Activated naive CD4-positive, alpha-beta T cell treated with anti-CD3 and anti-CD28 coated beads for 36 hours (primary cell): ENCODE measurements at regions of chr5 and their contacts with region 1.

Region 1: GRCh38 chr5:61331407-61332357 is at the start of gene ZSWIM6:
- DNase-seq: peak; percentile 99
- H3K4me3 Mint-ChIP-seq: peak within 1 kb of the TSS; percentile 87
- H3K27ac Mint-ChIP-seq: peak within 1 kb of the TSS; percentile 82
- H3K4me1 Mint-ChIP-seq: peaks cover 41% of the 10 kb centered on the region
- H3K27me3 Mint-ChIP-seq: peaks cover 20% of the 10 kb centered on the region
- total RNA-seq, gene ZSWIM6: 4.3 TPM

Region 2: DNA sequence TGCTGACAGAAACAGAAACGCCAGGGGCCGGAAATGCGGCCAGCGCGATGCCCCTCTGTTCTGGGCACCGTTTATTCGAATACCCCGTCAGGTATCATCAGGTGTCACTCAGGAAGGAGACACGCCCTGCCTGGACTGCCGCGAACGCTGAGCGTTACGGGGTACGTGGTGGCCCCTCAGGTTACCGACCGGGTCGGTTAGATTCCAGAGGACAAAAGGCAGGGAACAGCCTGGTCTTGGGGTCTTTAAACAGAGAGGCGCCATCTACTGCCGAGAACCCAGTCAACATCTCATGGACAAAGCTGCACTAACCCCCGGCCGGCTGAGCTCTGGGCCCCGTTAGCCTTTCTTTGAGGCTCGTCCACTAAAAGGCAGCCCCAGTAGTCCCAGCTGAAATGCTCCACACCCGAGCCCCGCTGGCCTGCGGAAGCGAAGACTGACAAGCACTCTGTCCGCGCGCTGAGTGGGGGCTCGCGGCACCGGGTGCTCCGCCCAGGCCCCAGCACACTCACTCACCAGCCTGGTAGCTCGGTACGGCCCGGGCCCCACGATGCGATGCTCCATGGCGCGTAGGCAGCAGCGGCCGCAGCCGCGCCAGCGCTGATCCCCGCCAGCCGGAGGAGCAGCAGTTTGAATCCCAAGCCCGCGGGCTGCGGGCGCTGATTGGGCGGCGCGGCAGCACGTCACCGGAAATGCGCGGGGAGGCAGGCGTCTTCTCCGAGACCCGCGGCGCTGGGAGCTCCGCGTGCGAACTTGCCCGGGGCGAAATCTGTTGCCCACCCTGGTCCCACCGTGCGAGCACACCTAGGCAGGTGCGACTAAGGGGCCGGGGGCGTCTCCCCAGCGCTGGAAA is 631.9 kb before region 1 on chr5 and contains the start of gene DEPDC1B:
- CTCF ChIA-PET with region 1: no interaction called
- intact Hi-C with region 1: loop called (anchors 1 kb)
- DNase-seq: peak; percentile 90
- H3K4me3 Mint-ChIP-seq: peak within 1 kb of the TSS; percentile 88
- H3K27ac Mint-ChIP-seq: peak within 1 kb of the TSS; percentile 81
- H3K4me1 Mint-ChIP-seq: peaks cover 12% of the 10 kb centered on the region
- H3K27me3 Mint-ChIP-seq: peaks cover 5% of the 10 kb centered on the region
- total RNA-seq, gene DEPDC1B: 35.0 to 35.8 TPM

Region 3: DNA sequence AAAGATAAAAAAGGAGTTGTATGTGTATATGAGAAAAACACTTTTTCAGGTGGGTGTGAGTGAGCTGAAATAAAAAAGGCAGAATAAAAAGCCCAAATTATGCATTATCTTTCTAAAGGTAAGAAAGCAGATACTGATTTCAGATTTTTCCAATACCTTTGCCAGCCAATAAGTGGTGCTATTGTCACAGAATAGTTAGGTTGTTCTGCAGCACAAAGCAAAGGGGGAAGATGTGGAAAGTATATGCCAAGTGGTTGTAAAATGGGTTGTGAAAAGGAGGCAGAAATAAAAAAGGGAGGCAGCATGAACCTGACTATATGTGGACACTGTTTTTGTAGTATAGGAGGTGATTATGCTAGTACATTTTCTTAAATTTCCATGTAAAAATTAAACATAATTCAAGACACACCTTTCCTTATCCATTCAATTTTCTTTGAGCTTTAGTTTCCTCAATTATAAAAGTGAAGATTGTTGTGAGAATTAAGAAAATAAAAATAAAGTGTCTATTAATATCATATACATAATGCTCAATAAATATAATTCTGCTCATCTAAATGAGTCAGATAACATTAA is 276.2 kb before region 1 on chr5:
- CTCF ChIA-PET with region 1: interaction called, 4 read pairs
- intact Hi-C with region 1: loop called (anchors 10 kb)
- DNase-seq: no peak
- H3K4me3 Mint-ChIP-seq: no peak overlapping the region
- H3K27ac Mint-ChIP-seq: no peak overlapping the region
- H3K4me1 Mint-ChIP-seq: no peaks in the 10 kb centered on the region
- H3K27me3 Mint-ChIP-seq: no peaks in the 10 kb centered on the region

Region 4: DNA sequence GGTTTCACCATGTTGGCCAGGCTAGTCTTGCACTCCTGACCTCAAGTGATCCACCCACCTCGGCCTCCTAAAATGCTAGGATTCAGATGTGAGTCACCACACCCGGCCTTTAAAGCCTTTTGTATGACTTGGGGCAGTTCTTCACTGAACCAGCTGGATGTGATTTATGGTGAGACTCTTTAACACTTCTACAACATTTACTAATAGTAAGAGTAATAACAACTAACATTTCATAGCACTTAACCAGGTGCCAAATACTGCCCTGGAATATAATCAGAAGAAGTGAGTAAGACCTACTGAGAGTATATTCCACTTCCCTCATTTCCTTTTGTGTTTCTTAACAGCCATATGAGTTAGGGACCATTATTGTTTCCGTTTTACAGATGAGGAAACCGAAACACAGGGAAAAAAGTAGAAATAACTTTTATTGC is 10.4 kb after region 1 on chr5:
- CTCF ChIA-PET with region 1: interaction called, 3 read pairs
- intact Hi-C with region 1: loop called (anchors 1 kb)
- DNase-seq: peak; percentile 31
- H3K4me3 Mint-ChIP-seq: no peak overlapping the region
- H3K27ac Mint-ChIP-seq: no peak overlapping the region
- H3K4me1 Mint-ChIP-seq: peaks cover 26% of the 10 kb centered on the region
- H3K27me3 Mint-ChIP-seq: no peaks in the 10 kb centered on the region

Region 5: GRCh38 chr5:61625681-61626621 is 294.3 kb after region 1 on chr5:
- CTCF ChIA-PET with region 1: no interaction called
- intact Hi-C with region 1: loop called (anchors 5 kb)
- DNase-seq: peak; percentile 60
- H3K4me3 Mint-ChIP-seq: peak overlapping the region; percentile 59
- H3K27ac Mint-ChIP-seq: no peak overlapping the region
- H3K4me1 Mint-ChIP-seq: no peaks in the 10 kb centered on the region
- H3K27me3 Mint-ChIP-seq: peaks cover 40% of the 10 kb centered on the region

Region 6: DNA sequence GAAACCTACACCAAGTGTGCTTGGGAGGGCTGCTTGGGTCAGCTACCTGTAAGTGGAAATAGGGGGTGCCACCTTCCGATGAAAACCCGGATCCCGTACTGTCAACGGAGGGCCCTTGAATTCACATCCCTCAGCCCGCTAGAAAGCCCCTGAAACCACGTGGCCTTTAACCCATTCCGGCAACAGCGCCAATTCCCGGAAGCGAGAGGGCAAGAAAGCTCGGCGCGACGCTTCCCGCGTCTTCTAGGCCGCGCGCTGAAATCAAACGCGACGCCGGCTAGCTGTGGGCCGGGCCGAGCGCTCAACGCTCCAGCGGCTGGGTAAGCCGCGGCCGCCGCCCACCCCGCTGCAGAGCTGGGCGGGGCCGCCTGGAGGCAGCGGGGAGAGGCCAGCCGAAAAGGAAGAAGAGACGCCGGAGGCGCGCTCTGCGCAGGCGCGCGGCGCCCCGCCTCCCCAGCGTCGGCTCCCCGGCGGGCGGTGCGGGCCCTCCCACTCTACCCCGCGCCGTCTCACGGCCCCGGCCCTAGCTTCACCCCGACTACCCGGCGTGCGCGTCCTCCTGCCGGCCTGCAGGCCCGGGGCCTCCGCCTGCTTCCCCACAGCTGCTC is 974.1 kb after region 1 on chr5 and contains the start of gene KIF2A:
- CTCF ChIA-PET with region 1: no interaction called
- intact Hi-C with region 1: loop called (anchors 2 kb)
- DNase-seq: peak; percentile 96
- H3K4me3 Mint-ChIP-seq: peak within 1 kb of the TSS; percentile 95
- H3K27ac Mint-ChIP-seq: peak within 1 kb of the TSS; percentile 96
- H3K4me1 Mint-ChIP-seq: peaks cover 45% of the 10 kb centered on the region
- H3K27me3 Mint-ChIP-seq: no peaks in the 10 kb centered on the region
- total RNA-seq, gene KIF2A: 101 to 117 TPM